ENCODE measurements at regions of chr1 and their contacts with region 1.

Region 1: GRCh38 chr1:31626223-31627207 is 9.0 kb downstream of the HCRTR1 start:
- DNase-seq: peak; percentile 49 to 81
- ATAC-seq: peak; percentile 35 to 42
- H3K4me3 ChIP-seq: no peak overlapping the region
- H3K27ac ChIP-seq: peak overlapping the region; percentile 89 to 99 (median 97)
- H3K4me1 ChIP-seq: peaks cover 39 to 47% of the 10 kb centered on the region in 2 donors
- H3K27me3 ChIP-seq: no peaks in the 10 kb centered on the region
- CTCF ChIP-seq: no peak
- POLR2A ChIP-seq: peak in 1 of 2 donors; percentile 8

Region 2: DNA sequence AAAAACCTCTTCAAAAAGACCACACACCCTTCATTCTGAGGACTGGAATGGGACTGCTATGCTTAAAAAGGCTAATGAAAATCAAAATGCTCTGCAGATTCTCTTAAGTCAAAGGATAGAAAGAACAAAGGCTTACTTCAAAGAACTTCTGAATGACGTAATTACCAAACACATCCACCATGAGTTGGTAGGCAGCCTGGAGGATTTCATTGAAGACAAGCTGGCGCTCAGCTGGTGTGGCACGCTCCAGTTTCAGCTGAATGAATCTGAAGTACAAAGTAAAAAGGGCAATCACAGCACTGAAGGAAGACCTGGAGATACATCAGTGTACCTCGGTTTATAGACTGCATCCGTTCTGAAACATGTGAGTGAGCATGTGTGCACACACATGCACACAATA is 674.4 kb before region 1 on chr1:
- in situ Hi-C with region 1: no loop called
- intact Hi-C with region 1: no loop called
- DNase-seq: no peak
- ATAC-seq: no peak
- H3K4me3 ChIP-seq: no peak overlapping the region
- H3K27ac ChIP-seq: no peak overlapping the region
- H3K4me1 ChIP-seq: peaks cover 0 to 2% of the 10 kb centered on the region in 2 donors
- H3K27me3 ChIP-seq: no peaks in the 10 kb centered on the region
- CTCF ChIP-seq: no peak
- POLR2A ChIP-seq: no peak

Region 3: GRCh38 chr1:31196685-31197084 is 429.8 kb before region 1 on chr1:
- in situ Hi-C with region 1: no loop called
- intact Hi-C with region 1: no loop called
- DNase-seq: peak in 1 of 2 donors; percentile 39
- ATAC-seq: peak; percentile 58 to 73
- H3K4me3 ChIP-seq: no peak overlapping the region
- H3K27ac ChIP-seq: no peak overlapping the region
- H3K4me1 ChIP-seq: no peaks in the 10 kb centered on the region
- H3K27me3 ChIP-seq: no peaks in the 10 kb centered on the region
- CTCF ChIP-seq: no peak
- POLR2A ChIP-seq: no peak

Region 4: DNA sequence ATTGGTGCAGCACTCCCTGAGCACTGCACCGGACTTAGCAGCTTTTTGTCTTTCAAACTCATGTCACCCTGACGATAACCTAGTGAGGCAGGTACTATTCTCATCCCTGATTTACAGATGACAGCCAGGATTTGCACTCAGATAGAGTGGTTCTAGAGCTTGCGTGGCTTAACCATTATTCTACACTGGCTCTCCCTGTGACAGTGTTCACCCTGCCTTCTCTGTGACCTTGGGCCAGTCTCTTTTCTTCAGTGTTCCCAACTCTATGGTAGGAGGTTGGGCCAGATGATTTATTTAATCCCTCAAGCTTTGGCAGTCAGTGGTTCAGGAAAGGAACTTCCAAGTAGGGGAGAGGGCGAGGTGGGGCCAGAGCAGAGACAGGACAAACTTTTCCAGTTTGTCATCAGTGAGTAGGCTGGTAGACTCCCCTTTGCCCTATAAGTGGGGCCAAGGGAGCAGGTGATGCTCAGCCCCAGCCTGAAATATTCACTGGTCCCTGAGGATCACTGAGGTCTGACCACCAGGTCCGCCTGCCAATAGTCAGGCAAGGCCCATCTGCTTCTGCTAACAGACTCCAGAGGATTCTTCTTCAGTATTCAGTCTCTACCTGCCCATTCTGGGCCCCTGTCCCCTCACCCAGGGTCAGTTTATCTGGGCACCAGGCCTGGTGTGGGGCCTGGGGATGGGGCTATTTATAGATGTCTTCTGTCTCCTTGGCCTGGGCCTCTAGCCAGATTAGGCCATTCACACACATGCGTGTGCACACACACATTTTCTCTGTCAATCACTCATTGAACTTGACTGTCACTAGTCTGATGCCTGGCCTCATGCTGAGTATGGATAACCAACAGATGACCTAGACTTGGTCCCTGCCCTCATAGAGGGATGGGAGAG is 244.9 kb before region 1 on chr1:
- in situ Hi-C with region 1: no loop called
- intact Hi-C with region 1: loop called (anchors 2 kb)
- DNase-seq: peak; percentile 84 to 95
- ATAC-seq: peak; percentile 65 to 74
- H3K4me3 ChIP-seq: peak overlapping the region in 1 of 4 donors; percentile 3
- H3K27ac ChIP-seq: peak overlapping the region; percentile 91 to 97 (median 94)
- H3K4me1 ChIP-seq: peaks cover 60 to 71% of the 10 kb centered on the region in 2 donors
- H3K27me3 ChIP-seq: no peaks in the 10 kb centered on the region
- CTCF ChIP-seq: no peak
- POLR2A ChIP-seq: peak in 1 of 2 donors; percentile 7

Region 5: GRCh38 chr1:31595836-31596736 is 30.4 kb before region 1 on chr1:
- in situ Hi-C with region 1: no loop called
- intact Hi-C with region 1: no loop called
- DNase-seq: no peak
- ATAC-seq: no peak
- H3K4me3 ChIP-seq: no peak overlapping the region
- H3K27ac ChIP-seq: peak overlapping the region; percentile 29 to 72 (median 54)
- H3K4me1 ChIP-seq: no peaks in the 10 kb centered on the region
- H3K27me3 ChIP-seq: no peaks in the 10 kb centered on the region
- CTCF ChIP-seq: no peak
- POLR2A ChIP-seq: no peak

Region 6: GRCh38 chr1:31639543-31639942 is 13.0 kb after region 1 on chr1:
- in situ Hi-C with region 1: no loop called
- intact Hi-C with region 1: loop called (anchors 1 kb)
- DNase-seq: peak; percentile 30 to 59
- ATAC-seq: peak; percentile 68 to 74
- H3K4me3 ChIP-seq: peak overlapping the region in 1 of 4 donors; percentile 7
- H3K27ac ChIP-seq: peak overlapping the region; percentile 87 to 99 (median 96)
- H3K4me1 ChIP-seq: peaks cover 78 to 88% of the 10 kb centered on the region in 2 donors
- H3K27me3 ChIP-seq: no peaks in the 10 kb centered on the region
- CTCF ChIP-seq: no peak
- POLR2A ChIP-seq: peak; percentile 57 to 66

Region 7: GRCh38 chr1:31923901-31924535 is 297.5 kb after region 1 on chr1:
- in situ Hi-C with region 1: no loop called
- intact Hi-C with region 1: no loop called
- DNase-seq: no peak
- ATAC-seq: no peak
- H3K4me3 ChIP-seq: peak overlapping the region in 1 of 4 donors; percentile 10
- H3K27ac ChIP-seq: peak overlapping the region; percentile 46 to 64 (median 56)
- H3K4me1 ChIP-seq: peaks cover 67 to 72% of the 10 kb centered on the region in 2 donors
- H3K27me3 ChIP-seq: no peaks in the 10 kb centered on the region
- CTCF ChIP-seq: no peak
- POLR2A ChIP-seq: no peak